HepG2 (cell line): ENCODE measurements at regions of chr4 and their contacts with region 1.

Region 1: DNA sequence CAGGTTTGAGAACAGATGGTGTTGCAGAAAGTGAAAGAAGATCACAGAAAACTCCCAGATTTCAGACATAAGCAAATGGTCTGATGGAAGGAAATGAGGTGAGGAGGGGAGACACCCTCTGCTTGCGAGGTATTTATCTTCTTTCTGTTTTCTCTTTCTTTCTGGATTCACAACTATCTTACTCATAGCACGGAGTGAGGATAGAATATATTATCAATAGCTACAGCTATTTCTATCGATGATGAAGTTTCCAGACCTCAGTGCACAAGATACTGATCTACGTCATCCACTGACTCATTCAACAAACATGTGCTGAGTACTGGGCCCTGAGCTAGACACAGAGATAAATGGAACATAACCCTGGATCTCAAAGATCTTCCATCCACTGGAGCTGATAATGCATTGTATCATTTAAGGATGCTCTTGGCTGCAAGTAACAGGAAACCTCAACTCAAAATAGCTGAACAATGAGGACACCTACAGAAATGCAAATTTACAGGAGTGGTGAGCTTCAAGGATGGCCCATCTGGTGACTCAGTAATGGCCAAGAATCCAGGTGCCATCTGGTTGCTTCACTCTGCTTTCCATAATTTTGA is 21.2 kb downstream of the SLC2A9 start:
- DNase-seq: no peak
- ATAC-seq: no peak
- H3K4me3 ChIP-seq: no peak overlapping the region
- H3K27ac ChIP-seq: no peak overlapping the region
- H3K4me1 ChIP-seq: peaks cover 94% of the 10 kb centered on the region
- H3K27me3 ChIP-seq: no peaks in the 10 kb centered on the region
- CTCF ChIP-seq: no peak
- EP300 ChIP-seq: no peak
- POLR2A ChIP-seq: no peak
- RAD21 ChIP-seq: no peak

Region 2: DNA sequence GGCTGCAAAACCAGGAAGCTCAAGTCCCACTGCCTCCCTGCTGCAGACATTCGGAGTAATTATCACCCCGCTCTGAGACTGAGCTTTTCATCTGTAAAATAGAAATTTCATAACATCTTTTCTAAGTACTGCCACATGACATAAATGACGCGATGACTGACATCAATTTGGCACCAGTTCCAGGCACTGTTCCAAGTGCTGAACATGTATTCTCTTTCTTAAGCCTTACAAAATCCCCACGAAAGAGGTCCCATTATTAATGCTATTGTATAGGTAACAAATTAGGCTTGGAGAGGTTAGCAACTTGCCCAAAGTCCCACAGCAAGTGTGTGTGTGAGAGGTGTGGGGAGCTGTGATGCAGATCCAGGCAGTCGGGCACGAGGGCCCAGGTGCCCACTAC is 35.2 kb before region 1 on chr4:
- CTCF ChIA-PET with region 1: no interaction called
- POLR2A ChIA-PET with region 1: no interaction called
- in situ Hi-C with region 1: no loop called
- intact Hi-C with region 1: loop called (anchors 5 kb)
- DNase-seq: no peak
- ATAC-seq: no peak
- H3K4me3 ChIP-seq: no peak overlapping the region
- H3K27ac ChIP-seq: no peak overlapping the region
- H3K4me1 ChIP-seq: peaks cover 26% of the 10 kb centered on the region
- H3K27me3 ChIP-seq: no peaks in the 10 kb centered on the region
- CTCF ChIP-seq: no peak
- EP300 ChIP-seq: no peak
- POLR2A ChIP-seq: no peak
- RAD21 ChIP-seq: no peak

Region 3: DNA sequence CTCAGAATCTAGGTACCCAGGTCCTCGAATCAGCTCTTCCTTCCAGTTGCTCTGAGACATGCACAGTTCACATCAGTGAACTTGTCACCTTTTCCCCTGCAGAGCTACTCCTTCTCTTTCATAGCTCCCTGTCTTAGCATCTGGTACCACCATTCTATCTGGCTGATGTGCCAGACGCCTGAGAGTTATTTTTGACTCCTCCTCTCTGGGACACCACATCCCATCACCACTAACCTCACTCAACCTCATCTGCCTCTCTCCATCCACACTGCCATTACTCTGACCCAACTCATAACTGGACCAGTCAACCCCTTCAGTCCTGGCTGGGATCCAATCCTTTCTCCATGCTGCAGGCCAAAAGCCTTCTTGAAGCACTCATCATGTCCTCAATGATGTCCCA is 23.3 kb before region 1 on chr4:
- CTCF ChIA-PET with region 1: no interaction called
- POLR2A ChIA-PET with region 1: no interaction called
- in situ Hi-C with region 1: no loop called
- intact Hi-C with region 1: no loop called
- DNase-seq: no peak
- ATAC-seq: no peak
- H3K4me3 ChIP-seq: no peak overlapping the region
- H3K27ac ChIP-seq: no peak overlapping the region
- H3K4me1 ChIP-seq: 0 out of 2 replicates have a peak, but pooled peaks cover 3% of the 10 kb centered on the region
- H3K27me3 ChIP-seq: no peaks in the 10 kb centered on the region
- CTCF ChIP-seq: no peak
- EP300 ChIP-seq: no peak
- POLR2A ChIP-seq: no peak
- RAD21 ChIP-seq: no peak